ENCODE measurements at regions of chr1 and their contacts with region 1.

Region 1: GRCh38 chr1:182601416-182601786 is 2.8 kb downstream of the RGS16 start:
- DNase-seq: peak; percentile 48
- H3K4me3 Mint-ChIP-seq: no peak overlapping the region
- H3K27ac Mint-ChIP-seq: no peak overlapping the region
- H3K4me1 Mint-ChIP-seq: peaks cover 18% of the 10 kb centered on the region
- H3K27me3 Mint-ChIP-seq: no peaks in the 10 kb centered on the region

Region 2: DNA sequence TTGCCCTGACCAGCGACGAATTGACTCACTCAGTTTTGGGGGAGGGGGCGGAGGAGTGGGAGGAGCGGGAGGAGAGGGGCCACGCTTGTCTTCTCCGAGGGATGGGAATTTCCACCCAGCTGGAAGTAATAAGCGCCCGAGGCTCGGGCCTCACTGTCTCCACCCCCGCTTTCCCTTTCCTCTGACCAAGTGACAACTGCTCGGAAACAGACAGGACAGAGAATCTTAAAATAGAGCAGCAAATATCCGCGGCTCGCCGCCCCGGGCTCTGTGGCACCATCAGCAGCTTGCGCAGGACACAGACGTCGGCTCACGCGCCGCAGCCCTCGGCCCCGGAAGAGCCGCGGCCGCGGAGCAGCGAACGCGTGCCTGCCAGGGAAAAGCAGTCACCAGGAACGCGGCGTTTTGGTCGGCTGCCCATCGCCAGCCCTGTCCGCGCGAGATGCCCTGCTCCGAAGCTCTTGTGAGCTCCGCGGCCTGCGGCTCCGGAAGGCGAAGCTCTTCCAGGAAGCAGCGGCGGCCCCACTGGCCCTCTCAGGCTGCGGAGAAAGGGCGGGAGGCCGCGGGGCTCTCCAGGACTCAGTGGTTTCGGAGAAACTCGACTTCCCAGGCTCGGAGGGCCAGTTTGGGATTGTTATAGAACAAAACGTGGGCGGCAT is 13.5 kb after region 1 on chr1:
- intact Hi-C with region 1: loop called (anchors 1 kb)
- DNase-seq: peak; percentile 31
- H3K4me3 Mint-ChIP-seq: peak overlapping the region; percentile 72
- H3K27ac Mint-ChIP-seq: peak overlapping the region; percentile 86
- H3K4me1 Mint-ChIP-seq: peaks cover 64% of the 10 kb centered on the region
- H3K27me3 Mint-ChIP-seq: peaks cover 32% of the 10 kb centered on the region

Region 3: DNA sequence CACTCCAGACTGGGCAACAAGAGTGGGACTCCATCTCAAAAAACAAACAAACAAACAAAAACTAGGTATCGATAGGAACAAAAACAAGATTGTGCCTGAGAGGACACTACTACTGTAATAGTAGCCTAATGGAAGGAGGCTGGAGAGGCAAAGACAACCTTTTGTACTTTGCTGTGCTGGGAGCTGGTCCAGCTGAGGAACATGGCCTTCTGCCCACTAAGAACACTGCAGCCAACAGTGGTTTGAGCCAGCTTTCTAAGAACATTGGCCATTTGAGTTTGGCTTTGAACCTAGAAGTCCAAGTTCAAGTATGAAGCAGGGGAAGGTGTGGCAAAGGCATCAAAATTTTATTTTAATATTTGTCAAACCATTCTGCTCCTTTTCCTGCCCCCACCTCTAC is 105.7 kb after region 1 on chr1:
- intact Hi-C with region 1: loop called (anchors 1 kb)
- DNase-seq: no peak
- H3K4me3 Mint-ChIP-seq: no peak overlapping the region
- H3K27ac Mint-ChIP-seq: no peak overlapping the region
- H3K4me1 Mint-ChIP-seq: peaks cover 28% of the 10 kb centered on the region
- H3K27me3 Mint-ChIP-seq: peaks cover 4% of the 10 kb centered on the region

Region 4: DNA sequence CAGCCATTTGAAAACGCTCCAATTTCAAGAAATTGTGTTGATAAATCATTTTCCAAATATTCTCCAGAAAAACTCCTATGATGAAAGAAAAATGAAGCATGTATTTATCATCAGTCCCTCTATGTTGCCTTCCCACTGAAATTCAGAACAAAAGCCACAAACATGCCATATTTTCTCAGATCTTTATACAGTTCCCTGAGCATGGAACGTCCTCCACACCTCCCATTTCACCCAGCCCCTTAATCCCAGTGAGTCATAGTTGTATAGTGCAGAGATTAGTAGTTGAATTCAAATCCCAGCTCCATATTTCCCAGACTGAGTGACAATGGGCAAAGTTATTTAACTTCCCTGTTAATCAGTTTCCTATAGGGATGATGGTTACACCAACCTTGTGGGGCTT is 167.6 kb after region 1 on chr1:
- intact Hi-C with region 1: no loop called
- DNase-seq: no peak
- H3K4me3 Mint-ChIP-seq: no peak overlapping the region
- H3K27ac Mint-ChIP-seq: no peak overlapping the region
- H3K4me1 Mint-ChIP-seq: no peaks in the 10 kb centered on the region
- H3K27me3 Mint-ChIP-seq: peaks cover 23% of the 10 kb centered on the region

Region 5: GRCh38 chr1:182781841-182782586 is 180.6 kb after region 1 on chr1:
- intact Hi-C with region 1: loop called (anchors 1 kb)
- DNase-seq: peak; percentile 55
- H3K4me3 Mint-ChIP-seq: no peak overlapping the region
- H3K27ac Mint-ChIP-seq: no peak overlapping the region
- H3K4me1 Mint-ChIP-seq: peaks cover 13% of the 10 kb centered on the region
- H3K27me3 Mint-ChIP-seq: peaks cover 8% of the 10 kb centered on the region